Right ventricle myocardium superior (tissue), 1 donor: ENCODE measurements at regions of chr10 and their contacts with region 1.

Region 1: DNA sequence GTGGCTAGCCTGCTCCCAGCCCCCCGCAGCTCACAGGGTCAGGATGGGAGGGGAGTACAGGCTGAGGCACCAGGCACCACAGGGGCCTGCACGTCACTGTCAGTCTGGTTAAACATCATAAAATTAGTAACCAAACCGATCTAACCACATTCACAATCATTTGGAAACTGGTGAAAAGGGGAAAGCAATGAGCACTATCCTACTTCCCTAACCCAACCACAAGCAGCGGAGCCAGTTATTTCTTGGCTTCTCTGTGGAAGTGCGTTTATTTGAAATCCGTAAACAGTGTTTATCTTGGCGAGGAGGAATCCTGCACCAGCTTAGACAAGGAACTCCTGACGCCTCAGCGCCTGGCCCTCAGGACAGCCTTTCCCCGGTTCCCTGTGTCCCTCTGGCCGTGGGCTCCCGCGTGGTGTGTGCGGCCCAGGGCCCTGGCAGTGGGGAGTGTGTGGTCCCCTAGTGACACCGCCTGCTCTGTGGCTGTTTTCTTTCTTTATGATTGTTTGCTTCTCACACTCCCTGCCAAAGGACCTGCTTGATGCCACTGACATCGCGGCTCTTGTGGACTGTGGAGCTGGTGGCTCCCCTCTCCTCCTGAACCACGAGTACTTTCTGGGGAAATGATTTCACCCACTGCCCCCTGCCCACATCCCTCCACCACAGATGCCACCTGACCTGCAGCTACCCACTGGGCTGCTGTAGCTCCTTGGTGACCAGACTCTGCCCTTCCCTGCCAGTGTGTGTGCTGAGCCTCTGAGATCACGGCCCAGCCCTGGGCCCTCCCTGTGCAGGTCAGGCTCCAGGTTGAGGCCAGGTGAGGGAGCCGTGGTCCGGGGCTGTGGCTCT is 38.0 kb downstream of the INPP5A start:
- DNase-seq: peak; percentile 64
- ATAC-seq: peak; percentile 28

Region 2: GRCh38 chr10:132458593-132459300 is 116.8 kb before region 1 on chr10:
- intact Hi-C with region 1: loop called (anchors 5 kb)
- DNase-seq: peak; percentile 81
- ATAC-seq: peak; percentile 68